ENCODE measurements at regions of chr6 and their contacts with region 1.

Region 1: DNA sequence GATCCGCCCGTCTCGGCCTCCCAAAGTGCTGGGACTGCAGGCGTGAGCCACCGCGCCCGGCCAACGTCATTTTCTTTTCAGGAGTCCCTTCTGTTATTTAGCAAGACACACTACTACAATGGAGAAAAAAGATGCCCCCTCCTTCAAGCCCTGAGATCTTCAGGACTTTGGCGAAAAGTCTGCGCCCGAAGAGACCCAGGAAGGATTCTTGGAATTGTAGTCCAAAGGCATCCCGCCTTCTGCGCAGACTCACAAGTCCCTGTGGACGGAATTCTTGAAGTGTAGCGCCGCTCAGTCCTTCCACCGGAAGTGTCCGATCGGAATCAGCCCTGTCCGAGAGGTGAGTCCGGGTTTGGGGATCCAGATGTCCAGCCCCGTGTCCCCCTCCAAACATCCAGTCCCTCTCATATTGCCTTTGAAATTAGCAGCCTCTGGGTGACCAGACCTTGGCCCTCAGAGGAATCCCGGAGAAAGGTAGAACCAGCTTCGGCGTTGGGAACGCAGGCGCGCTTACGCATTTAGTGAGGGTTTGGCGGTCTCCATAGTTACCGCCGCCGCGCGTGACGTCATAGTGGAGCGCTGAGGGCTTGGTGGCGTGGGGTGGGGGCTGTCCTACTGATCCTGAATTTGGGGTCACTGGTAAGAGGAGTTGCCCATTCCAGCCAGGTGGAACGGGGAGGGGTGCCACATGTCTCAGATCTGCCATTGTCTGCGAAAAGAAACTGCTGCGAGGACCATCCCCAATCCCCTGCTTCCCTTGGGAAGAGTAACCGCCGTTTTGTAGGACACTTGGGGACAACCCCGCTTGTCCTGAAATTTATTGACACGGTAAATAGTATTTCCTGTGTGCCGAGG is 490 bp downstream of the ZNF165 start:
- DNase-seq: peak; percentile 95
- H3K4me3 ChIP-seq: peak overlapping the region; percentile 63 to 89
- H3K27ac ChIP-seq: peak overlapping the region; percentile 88 to 91
- H3K4me1 ChIP-seq: peaks cover 11% of the 10 kb centered on the region
- H3K27me3 ChIP-seq: no peaks in the 10 kb centered on the region
- CTCF ChIP-seq: peak in 1 of 3 experiments; percentile 5
- POLR2A ChIP-seq: no peak

Region 2: DNA sequence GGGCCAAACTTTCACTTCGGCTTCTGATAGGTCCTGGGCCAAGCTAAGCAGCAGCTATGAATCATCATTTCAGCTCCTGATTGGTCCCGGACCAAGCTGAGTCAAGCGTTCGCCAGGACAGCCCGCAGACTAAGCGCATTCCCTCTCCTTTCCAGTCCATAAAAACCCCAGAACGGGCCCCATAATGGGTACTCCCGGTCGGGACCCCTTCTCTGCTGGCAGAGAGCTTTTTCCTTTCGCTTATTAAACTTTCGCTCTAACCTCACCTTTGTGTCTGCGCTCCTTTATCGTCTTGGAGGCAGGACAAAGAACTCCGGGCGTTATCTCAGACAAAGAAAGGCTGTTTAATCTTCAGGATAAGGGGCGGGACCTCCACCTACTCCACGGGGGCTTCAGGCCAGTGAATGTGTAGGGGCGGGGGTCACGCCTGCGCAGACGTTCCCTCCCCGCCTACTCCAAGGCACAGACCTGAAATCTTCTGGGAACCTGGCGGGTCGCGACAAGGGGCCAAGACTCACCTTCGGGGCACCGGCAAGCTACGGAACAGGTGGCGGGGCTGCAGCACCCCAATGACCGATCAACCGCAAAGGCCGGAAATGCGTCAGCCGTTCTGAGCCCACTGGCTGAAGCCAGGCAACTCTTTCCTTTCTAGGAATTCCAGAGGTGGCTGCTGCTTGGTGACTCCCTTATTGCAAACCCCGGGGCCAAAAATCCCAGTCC is 254.9 kb after region 1 on chr6 and contains the start of gene ZSCAN31:
- intact Hi-C with region 1: loop called (anchors 5 kb)
- DNase-seq: peak; percentile 99
- H3K4me3 ChIP-seq: peak within 1 kb of the TSS; percentile 59 to 70
- H3K27ac ChIP-seq: peak within 1 kb of the TSS; percentile 92 to 93
- H3K4me1 ChIP-seq: peaks cover 15% of the 10 kb centered on the region
- H3K27me3 ChIP-seq: no peaks in the 10 kb centered on the region
- CTCF ChIP-seq: no peak
- POLR2A ChIP-seq: peak; percentile 4
- total RNA-seq, gene ZSCAN31: 21.4 to 29.0 TPM

Measured in testis (tissue), 5 donors.